Activated CD8-positive, alpha-beta T cell treated with anti-CD3 and anti-CD28 coated beads, Interleukin-2, amount 10 ng/mL, durations not matched to agents 7 days and 5 days (primary cell): ENCODE measurements at regions of chr1 and their contacts with region 1.

Region 1: DNA sequence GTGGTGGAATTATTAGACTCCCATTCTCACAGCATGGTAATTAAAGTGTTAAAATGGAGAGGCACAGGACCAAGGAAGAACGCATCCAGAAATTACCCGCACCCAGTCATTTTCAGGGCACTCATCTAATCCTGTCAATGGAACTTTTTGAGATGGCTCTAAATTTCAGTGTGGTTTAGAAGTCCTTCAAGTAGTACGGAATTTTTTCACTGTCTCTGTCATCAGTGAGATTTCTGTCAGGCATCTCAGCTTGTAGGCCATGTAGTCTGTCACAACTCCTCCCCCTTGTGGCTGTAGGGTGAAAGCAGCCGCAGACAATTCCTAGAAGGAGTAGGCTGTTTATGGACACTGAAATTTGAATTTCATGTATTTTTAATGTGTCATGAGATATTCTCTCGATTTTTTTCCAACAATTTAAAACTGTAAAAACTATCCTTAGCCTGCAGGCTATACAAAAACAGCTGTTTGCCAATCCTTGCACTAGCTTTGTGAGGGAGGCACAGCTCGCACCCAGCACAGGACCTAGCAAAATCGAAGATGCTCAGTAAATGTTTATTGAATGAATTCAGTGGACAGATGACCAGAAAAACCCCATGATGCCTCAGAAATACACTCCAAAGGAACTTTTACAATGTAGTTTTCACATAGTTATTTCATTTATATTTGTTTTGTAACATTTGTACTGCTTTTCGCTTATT is 6.6 kb upstream of the NUP133 start:
- DNase-seq: peak; percentile 70
- ATAC-seq: peak; percentile 85
- H3K4me3 Mint-ChIP-seq: no peak overlapping the region
- H3K27ac Mint-ChIP-seq: no peak overlapping the region
- H3K4me1 Mint-ChIP-seq: peaks cover 12% of the 10 kb centered on the region
- H3K27me3 Mint-ChIP-seq: no peaks in the 10 kb centered on the region

Region 2: DNA sequence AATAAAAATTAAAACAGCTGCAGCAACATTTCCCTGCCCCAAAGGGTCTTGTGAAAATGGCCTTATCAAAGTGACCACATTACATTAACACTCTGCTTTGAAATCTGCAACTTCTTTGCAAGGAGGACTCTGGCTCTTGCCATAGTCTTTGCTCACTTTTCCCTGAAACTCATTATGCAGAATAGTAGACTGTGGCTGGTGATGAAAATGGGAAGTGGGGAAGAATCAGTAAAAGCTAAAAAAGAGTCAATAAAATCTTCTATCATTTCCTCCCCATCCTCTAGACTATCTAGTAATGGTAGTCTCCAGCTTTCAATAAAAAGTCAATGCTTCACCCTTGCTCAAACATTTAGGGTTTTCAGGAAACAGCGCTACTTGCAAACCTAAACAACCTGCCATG is 12.0 kb after region 1 on chr1:
- CTCF ChIA-PET with region 1: interaction called, 17 read pairs
- POLR2A ChIA-PET with region 1: no interaction called
- DNase-seq: no peak
- ATAC-seq: no peak
- H3K4me3 Mint-ChIP-seq: no peak overlapping the region
- H3K27ac Mint-ChIP-seq: no peak overlapping the region
- H3K4me1 Mint-ChIP-seq: peaks cover 5% of the 10 kb centered on the region
- H3K27me3 Mint-ChIP-seq: no peaks in the 10 kb centered on the region